ENCODE measurements at regions of chr20 and their contacts with region 1.

Region 1: DNA sequence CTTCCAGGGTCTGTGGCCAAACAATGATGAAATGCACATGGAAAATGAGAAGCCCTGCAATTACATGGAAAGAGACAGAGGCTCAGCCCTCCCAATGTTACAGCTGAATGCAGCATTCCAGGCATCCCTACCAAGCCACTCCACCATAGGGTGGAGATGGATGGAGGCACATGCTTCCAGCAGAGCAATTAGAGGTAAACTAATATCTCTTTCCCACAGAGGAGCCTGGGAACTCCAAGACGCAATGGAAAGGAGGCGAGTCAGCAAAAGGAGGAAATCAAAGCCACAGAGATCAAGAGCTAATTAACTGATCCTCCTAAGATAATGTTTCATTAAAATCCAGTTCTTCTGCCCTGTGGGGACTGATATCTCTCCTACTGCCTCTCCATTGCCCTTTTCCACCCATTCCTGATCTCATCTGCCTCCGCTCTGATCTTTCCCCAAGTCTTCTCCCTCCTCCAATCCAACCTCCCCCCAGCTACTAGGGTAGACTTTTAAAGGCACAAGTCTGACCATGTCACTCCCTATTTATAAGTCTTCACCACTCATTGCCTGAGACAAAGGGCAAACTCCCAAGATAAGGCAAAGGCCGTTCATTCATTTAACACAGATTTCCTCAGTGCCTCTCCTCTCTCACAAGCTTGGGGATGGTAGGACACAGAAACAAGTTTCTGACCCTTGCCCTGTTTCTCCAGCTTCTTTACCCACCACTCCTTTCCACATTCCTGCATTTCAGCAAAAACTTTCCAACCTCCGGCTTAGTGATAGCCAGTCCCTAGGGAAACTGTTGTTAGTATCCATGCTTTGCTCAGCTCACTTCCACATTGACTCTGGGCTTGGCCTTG is 14.3 kb upstream of the KCNB1 start:
- DNase-seq: no peak

Region 2: GRCh38 chr20:49323622-49324238 is 173.0 kb before region 1 on chr20:
- in situ Hi-C with region 1: loop called (anchors 10 kb)
- DNase-seq: peak; percentile 22